Cardiac septum (tissue), 1 donor: ENCODE measurements at regions of chr4 and their contacts with region 1.

Region 1: DNA sequence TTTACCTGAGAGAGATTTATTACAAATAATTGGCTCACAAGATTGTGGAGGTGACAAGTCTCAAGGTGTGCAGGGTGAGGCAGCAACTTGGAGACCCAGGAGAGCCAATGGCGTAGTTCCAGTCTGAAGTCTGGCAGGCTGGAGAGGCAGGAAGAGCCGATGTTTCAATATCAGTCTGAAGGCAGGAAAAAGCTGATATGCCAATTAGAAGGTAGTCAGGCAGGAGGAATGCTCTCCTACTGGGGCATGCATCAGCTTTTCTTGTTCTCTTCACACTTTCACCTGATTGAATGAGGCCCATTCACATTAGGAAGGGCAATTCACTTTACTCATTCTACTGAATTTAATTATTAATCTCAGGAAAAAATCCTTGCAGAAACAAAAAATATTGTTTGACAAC is 1351.7 kb upstream of the ADGRL3 start:
- DNase-seq: no peak

Region 2: DNA sequence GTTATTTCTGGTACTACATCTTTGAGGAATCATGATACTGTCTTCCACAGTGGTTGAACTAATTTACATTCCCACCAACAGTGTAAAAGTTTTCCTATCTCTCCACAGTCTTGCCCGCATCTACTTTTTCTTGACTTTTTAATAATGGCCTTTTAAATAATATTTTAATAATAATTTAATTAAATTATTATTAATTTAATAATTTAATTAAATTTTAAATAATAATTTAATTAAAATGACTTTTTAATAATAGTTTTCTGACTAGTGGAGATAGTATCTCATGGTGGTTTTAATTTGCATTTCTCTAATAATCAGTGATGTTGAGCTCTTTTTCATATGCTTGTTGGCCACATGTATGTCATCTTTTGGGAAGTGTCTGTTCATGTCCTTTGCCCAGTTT is 43.3 kb before region 1 on chr4:
- intact Hi-C with region 1: loop called (anchors 2 kb)
- DNase-seq: no peak

Region 3: GRCh38 chr4:60173718-60174117 is 325.3 kb after region 1 on chr4:
- intact Hi-C with region 1: no loop called
- DNase-seq: no peak